ENCODE measurements at regions of chr3 and their contacts with region 1.

Region 1: GRCh38 chr3:27721717-27722542 is at the start of gene EOMES:
- DNase-seq: peak; percentile 70
- H3K4me3 Mint-ChIP-seq: peak within 1 kb of the TSS; percentile 75
- H3K27ac Mint-ChIP-seq: no peak within 1 kb of the TSS
- H3K4me1 Mint-ChIP-seq: no peaks in the 10 kb centered on the region
- H3K27me3 Mint-ChIP-seq: no peaks in the 10 kb centered on the region
- CTCF ChIP-seq: peak; percentile 82
- total RNA-seq, gene EOMES: 0.74 and 1.3 TPM in 2 replicates

Region 2: GRCh38 chr3:27737091-27737490 is 15.2 kb after region 1 on chr3:
- CTCF ChIA-PET with region 1: interaction called, 13 read pairs
- POLR2A ChIA-PET with region 1: interaction called, 3 read pairs
- intact Hi-C with region 1: no loop called
- DNase-seq: no peak
- H3K4me3 Mint-ChIP-seq: no peak overlapping the region
- H3K27ac Mint-ChIP-seq: no peak overlapping the region
- H3K4me1 Mint-ChIP-seq: no peaks in the 10 kb centered on the region
- H3K27me3 Mint-ChIP-seq: no peaks in the 10 kb centered on the region
- CTCF ChIP-seq: no peak

Region 3: DNA sequence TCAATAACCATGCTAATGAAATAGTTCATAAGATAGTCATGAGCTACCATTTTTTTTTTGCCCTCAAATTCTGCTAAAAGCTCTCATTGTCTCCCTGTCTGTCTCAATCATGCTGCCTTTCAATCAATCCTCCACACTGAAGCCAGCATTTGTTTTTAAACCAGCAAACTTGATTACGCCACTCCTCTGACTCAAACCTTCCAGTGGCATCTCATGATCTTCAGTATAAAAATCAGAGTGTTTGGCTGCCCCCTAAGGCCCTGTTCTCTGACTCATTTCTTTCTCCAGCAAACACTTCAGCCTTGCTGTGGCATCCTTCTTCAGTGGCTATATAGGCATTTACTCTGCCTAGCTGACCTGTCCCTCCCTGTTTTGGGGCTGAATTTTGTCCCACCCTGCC is 36.2 kb after region 1 on chr3:
- CTCF ChIA-PET with region 1: interaction called, 33 read pairs
- POLR2A ChIA-PET with region 1: interaction called, 21 read pairs
- intact Hi-C with region 1: loop called (anchors 1 kb)
- DNase-seq: peak; percentile 97
- H3K4me3 Mint-ChIP-seq: peak overlapping the region; percentile 17
- H3K27ac Mint-ChIP-seq: peak overlapping the region; percentile 61
- H3K4me1 Mint-ChIP-seq: peaks cover 35% of the 10 kb centered on the region
- H3K27me3 Mint-ChIP-seq: no peaks in the 10 kb centered on the region
- CTCF ChIP-seq: no peak

Region 4: GRCh38 chr3:28268989-28269388 is 547.1 kb after region 1 on chr3:
- CTCF ChIA-PET with region 1: interaction called, 14 read pairs
- POLR2A ChIA-PET with region 1: no interaction called
- intact Hi-C with region 1: no loop called
- DNase-seq: no peak
- H3K4me3 Mint-ChIP-seq: no peak overlapping the region
- H3K27ac Mint-ChIP-seq: no peak overlapping the region
- H3K4me1 Mint-ChIP-seq: peaks cover 6% of the 10 kb centered on the region
- H3K27me3 Mint-ChIP-seq: no peaks in the 10 kb centered on the region
- CTCF ChIP-seq: no peak

Region 5: DNA sequence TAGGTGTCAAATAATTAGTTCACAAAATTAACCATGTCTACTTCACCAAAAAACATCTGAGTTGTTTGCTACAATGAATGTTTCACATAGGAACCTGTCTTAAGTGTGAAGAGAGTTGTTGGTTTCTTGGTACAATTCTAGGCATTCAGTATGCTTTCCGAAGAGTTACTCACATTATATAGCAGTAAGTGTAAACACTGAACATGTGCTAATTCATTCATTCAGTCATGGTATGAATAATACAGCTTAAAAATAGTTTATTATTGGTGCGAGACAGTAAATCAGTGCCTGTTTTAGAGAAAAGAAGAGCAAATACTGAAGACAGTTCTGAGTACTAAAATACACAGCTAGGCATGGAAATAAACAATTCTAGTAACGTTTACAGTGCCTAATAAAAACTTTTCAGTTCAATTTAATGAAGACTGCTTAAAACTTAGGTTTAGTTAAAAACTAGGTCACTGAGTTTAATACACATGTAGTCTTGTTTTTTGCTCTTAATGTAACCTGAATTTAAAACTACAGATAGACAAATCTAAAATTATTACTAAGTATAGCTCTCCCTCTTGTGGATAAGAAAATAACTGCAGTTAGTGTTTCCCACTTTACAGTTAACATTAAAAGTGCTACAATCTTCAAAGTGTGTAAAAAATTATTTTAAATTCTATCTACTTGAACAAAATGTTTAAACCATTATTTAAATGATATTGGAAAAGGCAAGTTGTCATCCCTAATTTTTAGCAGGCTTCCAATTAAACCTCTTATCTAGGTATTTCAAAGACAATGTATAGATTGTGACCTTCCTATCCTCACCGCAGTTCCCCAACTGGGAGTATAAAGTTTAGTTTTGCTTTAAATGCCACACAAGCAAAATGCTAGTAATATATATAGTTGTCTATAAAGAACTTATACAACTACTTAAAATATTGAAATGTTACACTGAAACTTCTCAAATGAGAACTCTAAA is 606.5 kb after region 1 on chr3:
- CTCF ChIA-PET with region 1: interaction called, 16 read pairs
- POLR2A ChIA-PET with region 1: interaction called, 3 read pairs
- intact Hi-C with region 1: no loop called
- DNase-seq: peak; percentile 35
- H3K4me3 Mint-ChIP-seq: no peak overlapping the region
- H3K27ac Mint-ChIP-seq: no peak overlapping the region
- H3K4me1 Mint-ChIP-seq: no peaks in the 10 kb centered on the region
- H3K27me3 Mint-ChIP-seq: no peaks in the 10 kb centered on the region
- CTCF ChIP-seq: peak; percentile 37